Caco-2 (cell line): ENCODE measurements at regions of chr5 and their contacts with region 1.

Region 1: GRCh38 chr5:137660349-137660817 is 75.5 kb downstream of the KLHL3 start:
- DNase-seq: peak; percentile 77 to 78
- H3K4me3 ChIP-seq: no peak overlapping the region
- H3K4me3 Mint-ChIP-seq: no peak overlapping the region
- H3K27ac Mint-ChIP-seq: no peak overlapping the region
- H3K4me1 ChIP-seq: no peaks in the 10 kb centered on the region
- H3K4me1 Mint-ChIP-seq: no peaks in the 10 kb centered on the region
- H3K27me3 ChIP-seq: no peaks in the 10 kb centered on the region
- H3K27me3 Mint-ChIP-seq: peaks cover 2% of the 10 kb centered on the region
- CTCF ChIP-seq: peak; percentile 70 to 88

Region 2: GRCh38 chr5:137728048-137728447 is 67.7 kb after region 1 on chr5:
- CTCF ChIA-PET with region 1: interaction called, 10 read pairs
- POLR2A ChIA-PET with region 1: no interaction called
- intact Hi-C with region 1: no loop called
- DNase-seq: no peak
- H3K4me3 ChIP-seq: no peak overlapping the region
- H3K4me3 Mint-ChIP-seq: no peak overlapping the region
- H3K27ac Mint-ChIP-seq: no peak overlapping the region
- H3K4me1 ChIP-seq: peaks cover 12% of the 10 kb centered on the region
- H3K4me1 Mint-ChIP-seq: peaks cover 4% of the 10 kb centered on the region
- H3K27me3 ChIP-seq: no peaks in the 10 kb centered on the region
- H3K27me3 Mint-ChIP-seq: no peaks in the 10 kb centered on the region
- CTCF ChIP-seq: peak in 1 of 2 experiments; percentile 11

Region 3: GRCh38 chr5:137735555-137736284 is 75.3 kb after region 1 on chr5 and contains the start of gene KLHL3:
- CTCF ChIA-PET with region 1: interaction called, 93 read pairs
- POLR2A ChIA-PET with region 1: no interaction called
- intact Hi-C with region 1: loop called (anchors 1 kb)
- DNase-seq: peak; percentile 63 to 71
- H3K4me3 ChIP-seq: peak within 1 kb of the TSS; percentile 8
- H3K4me3 Mint-ChIP-seq: no peak within 1 kb of the TSS
- H3K27ac Mint-ChIP-seq: no peak within 1 kb of the TSS
- H3K4me1 ChIP-seq: peaks cover 25% of the 10 kb centered on the region
- H3K4me1 Mint-ChIP-seq: peaks cover 13% of the 10 kb centered on the region
- H3K27me3 ChIP-seq: no peaks in the 10 kb centered on the region
- H3K27me3 Mint-ChIP-seq: no peaks in the 10 kb centered on the region
- CTCF ChIP-seq: peak in 1 of 2 experiments; percentile 28
- total RNA-seq, gene KLHL3: 3.5 TPM in 2 replicates